ENCODE measurements at regions of chr22 and their contacts with region 1.

Region 1: GRCh38 chr22:31489604-31490495 is at the start of gene EIF4ENIF1:
- DNase-seq: peak; percentile 81 to 84
- ATAC-seq: peak; percentile 84 to 91
- H3K4me3 ChIP-seq: peak within 1 kb of the TSS; percentile 61 to 83 (median 78)
- H3K27ac ChIP-seq: peak within 1 kb of the TSS; percentile 86 to 99 (median 94)
- H3K4me1 ChIP-seq: peaks cover 22 to 31% of the 10 kb centered on the region in 2 donors
- H3K27me3 ChIP-seq: no peaks in the 10 kb centered on the region
- CTCF ChIP-seq: peak in 2 of 5 experiments; percentile 16 to 25
- POLR2A ChIP-seq: peak; percentile 71 to 75
- total RNA-seq, gene EIF4ENIF1: 10.1 to 19.6 (median 15.1) TPM

Region 2: GRCh38 chr22:31244044-31244942 is 245.6 kb before region 1 on chr22:
- in situ Hi-C with region 1: no loop called
- intact Hi-C with region 1: no loop called
- DNase-seq: peak; percentile 56 to 81
- ATAC-seq: peak; percentile 70 to 80
- H3K4me3 ChIP-seq: no peak overlapping the region
- H3K27ac ChIP-seq: peak overlapping the region; percentile 68 to 81 (median 77)
- H3K4me1 ChIP-seq: peaks cover 34% of the 10 kb centered on the region in 2 donors
- H3K27me3 ChIP-seq: no peaks in the 10 kb centered on the region
- CTCF ChIP-seq: no peak
- POLR2A ChIP-seq: no peak

Region 3: GRCh38 chr22:31399211-31400028 is 90.4 kb before region 1 on chr22 and contains the start of gene DRG1:
- in situ Hi-C with region 1: no loop called
- intact Hi-C with region 1: loop called (anchors 2 kb)
- DNase-seq: peak; percentile 96 to 97
- ATAC-seq: peak; percentile 96
- H3K4me3 ChIP-seq: peak within 1 kb of the TSS; percentile 70 to 90 (median 80)
- H3K27ac ChIP-seq: peak within 1 kb of the TSS; percentile 87 to 93 (median 91)
- H3K4me1 ChIP-seq: peaks cover 15 to 18% of the 10 kb centered on the region in 2 donors
- H3K27me3 ChIP-seq: no peaks in the 10 kb centered on the region
- CTCF ChIP-seq: peak in 3 of 5 experiments; percentile 12 to 21 (median 21)
- POLR2A ChIP-seq: peak; percentile 93 to 95
- total RNA-seq, gene DRG1: 117 to 136 (median 127) TPM

Region 4: DNA sequence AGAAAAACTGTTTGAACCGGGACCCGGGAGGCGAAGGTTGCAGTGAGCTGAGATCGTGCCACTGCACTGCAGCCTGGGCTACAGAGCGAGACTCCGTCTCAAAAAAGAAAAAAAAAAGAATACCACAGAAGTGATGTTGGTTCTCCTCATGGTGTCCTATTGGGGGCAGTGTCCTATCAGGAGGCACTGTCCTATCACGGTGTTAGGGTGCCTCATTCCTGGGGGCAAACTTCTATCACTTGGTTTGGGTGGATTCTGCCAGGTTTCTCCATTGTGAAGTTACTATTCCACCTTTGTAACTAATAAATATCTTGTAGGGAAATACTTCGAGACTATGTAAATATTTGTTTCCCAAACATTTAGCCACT is 240.5 kb after region 1 on chr22:
- in situ Hi-C with region 1: no loop called
- intact Hi-C with region 1: no loop called
- DNase-seq: no peak
- ATAC-seq: peak in 1 of 2 donors; percentile 49
- H3K4me3 ChIP-seq: no peak overlapping the region
- H3K27ac ChIP-seq: peak overlapping the region in 2 of 4 donors; percentile 35 to 53
- H3K4me1 ChIP-seq: peaks cover 5% of the 10 kb centered on the region in 2 donors
- H3K27me3 ChIP-seq: no peaks in the 10 kb centered on the region
- CTCF ChIP-seq: no peak
- POLR2A ChIP-seq: no peak